Common myeloid progenitor, CD34-positive (primary cell): ENCODE measurements at regions of chr6 and their contacts with region 1.

Region 1: DNA sequence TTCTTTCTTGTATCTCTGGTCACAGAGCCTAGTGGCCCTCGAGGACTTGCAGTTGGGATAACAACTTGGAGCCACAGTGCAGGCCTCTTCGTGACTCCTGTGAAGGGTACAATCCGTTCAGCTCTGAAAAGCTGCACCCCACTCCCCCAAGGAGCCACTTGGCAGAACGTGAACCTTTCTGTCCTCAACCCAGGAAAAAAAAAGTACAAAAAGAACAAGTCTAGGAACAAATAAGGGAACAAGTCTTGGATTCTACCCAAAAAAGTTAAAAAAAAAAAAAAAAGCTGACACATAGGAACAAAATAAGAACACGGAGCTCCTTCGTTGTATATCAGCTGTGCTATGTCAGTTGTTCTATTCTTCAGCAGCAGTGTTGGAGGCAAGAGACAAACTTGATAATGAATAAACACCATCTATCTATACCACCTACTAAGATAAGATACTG is 77.9 kb upstream of the TULP1 start:
- DNase-seq: no peak
- H3K4me3 ChIP-seq: no peak overlapping the region
- H3K27ac ChIP-seq: peak overlapping the region in 1 of 2 experiments; percentile 36
- H3K4me1 ChIP-seq: peaks cover 0 to 15% (median 5%) of the 10 kb centered on the region in 4 experiments
- H3K27me3 ChIP-seq: no peaks in the 10 kb centered on the region

Region 2: DNA sequence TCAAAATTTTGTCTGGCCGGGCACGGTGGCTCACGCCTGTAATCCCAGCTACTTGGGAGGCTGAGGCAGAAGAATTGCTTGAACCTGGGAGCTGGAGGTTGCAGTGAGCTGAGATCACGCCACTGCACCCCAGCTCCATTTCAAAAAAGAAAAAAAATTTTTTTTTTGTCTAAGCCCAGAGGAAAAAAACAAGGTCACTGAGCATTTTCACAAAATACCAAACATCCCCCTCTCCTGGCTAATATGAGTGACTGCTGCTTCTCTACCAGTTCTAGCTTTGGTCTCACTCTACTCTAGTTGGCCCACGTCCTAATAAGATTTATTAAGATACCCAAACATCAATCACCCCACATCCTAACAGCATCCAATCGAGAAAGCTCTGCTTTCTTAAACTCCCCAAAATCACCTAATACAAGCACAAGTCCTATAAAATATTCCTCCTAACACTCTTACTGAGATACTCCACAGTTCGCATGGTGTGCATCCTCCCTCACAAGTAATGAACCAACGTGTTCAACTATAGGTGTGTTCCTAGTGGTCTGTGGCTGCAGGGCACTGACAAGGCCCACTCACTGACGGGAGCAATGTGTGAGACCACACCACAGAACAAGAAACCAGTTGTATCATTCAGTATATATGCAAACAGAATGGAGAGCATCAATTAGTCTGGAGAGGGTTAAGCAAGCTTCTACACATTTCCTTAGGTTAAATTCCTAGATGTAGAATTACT is 33.9 kb after region 1 on chr6:
- CTCF ChIA-PET with region 1: interaction called, 17 read pairs
- POLR2A ChIA-PET with region 1: interaction called, 8 read pairs
- DNase-seq: peak; percentile 10 to 51 (median 46)
- H3K4me3 ChIP-seq: no peak overlapping the region
- H3K27ac ChIP-seq: no peak overlapping the region
- H3K4me1 ChIP-seq: no peaks in the 10 kb centered on the region
- H3K27me3 ChIP-seq: no peaks in the 10 kb centered on the region